AG04449 (cell line): ENCODE measurements at regions of chr1 and their contacts with region 1.

Region 1: GRCh38 chr1:225881969-225882693 is at the start of gene TMEM63A:
- DNase-seq: no peak
- H3K4me3 ChIP-seq: peak within 1 kb of the TSS; percentile 90
- CTCF ChIP-seq: peak; percentile 55

Region 2: DNA sequence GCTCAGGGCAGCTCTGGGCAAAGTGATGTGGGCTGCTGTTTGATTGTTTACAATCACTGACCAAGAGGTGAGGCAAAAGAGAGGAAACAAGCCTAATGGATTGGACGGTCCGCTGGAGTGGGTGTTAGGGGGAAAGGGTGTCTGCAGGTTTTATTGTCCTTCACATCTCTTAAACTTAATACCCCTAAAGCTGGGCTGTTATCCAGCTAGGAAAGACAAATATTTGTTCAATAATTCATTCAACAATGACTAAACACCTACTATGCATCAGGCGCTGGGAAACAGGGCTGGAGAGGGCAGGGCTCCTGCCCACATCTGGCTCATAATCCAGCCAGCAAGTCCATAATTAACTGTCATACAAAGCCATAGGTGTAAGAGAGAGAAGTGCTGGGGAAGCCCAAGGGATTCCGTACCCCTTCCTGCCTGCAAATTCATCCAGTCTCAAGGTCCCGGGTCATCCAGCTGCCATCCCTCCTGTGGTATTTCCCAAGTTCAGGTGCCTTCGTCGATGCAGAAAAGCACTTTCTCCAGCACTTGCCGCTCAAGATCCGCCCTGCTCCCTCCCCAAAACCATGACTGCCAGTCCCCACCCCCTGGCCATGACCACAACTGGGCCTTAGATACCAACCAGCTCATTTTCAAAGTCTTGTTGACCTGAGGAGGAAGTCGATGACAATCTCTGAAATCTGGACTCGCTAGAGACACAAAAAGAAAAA is 10.6 kb before region 1 on chr1:
- CTCF ChIA-PET with region 1: interaction called, 16 read pairs
- POLR2A ChIA-PET with region 1: interaction called, 3 read pairs
- DNase-seq: no peak
- H3K4me3 ChIP-seq: no peak overlapping the region
- CTCF ChIP-seq: no peak